ENCODE measurements at regions of chr12 and their contacts with region 1.

Region 1: GRCh38 chr12:57069523-57069922 is 9.1 kb downstream of the NEMP1 start:
- DNase-seq: no peak
- H3K4me3 ChIP-seq: peak overlapping the region in 1 of 8 donors; percentile 4
- H3K27ac ChIP-seq: peak overlapping the region; percentile 11 to 83 (median 76)
- H3K4me1 ChIP-seq: peaks cover 11 to 52% (median 29%) of the 10 kb centered on the region in 6 donors
- H3K27me3 ChIP-seq: no peaks in the 10 kb centered on the region
- CTCF ChIP-seq: peak; percentile 73 to 97 (median 92)
- POLR2A ChIP-seq: no peak

Region 2: DNA sequence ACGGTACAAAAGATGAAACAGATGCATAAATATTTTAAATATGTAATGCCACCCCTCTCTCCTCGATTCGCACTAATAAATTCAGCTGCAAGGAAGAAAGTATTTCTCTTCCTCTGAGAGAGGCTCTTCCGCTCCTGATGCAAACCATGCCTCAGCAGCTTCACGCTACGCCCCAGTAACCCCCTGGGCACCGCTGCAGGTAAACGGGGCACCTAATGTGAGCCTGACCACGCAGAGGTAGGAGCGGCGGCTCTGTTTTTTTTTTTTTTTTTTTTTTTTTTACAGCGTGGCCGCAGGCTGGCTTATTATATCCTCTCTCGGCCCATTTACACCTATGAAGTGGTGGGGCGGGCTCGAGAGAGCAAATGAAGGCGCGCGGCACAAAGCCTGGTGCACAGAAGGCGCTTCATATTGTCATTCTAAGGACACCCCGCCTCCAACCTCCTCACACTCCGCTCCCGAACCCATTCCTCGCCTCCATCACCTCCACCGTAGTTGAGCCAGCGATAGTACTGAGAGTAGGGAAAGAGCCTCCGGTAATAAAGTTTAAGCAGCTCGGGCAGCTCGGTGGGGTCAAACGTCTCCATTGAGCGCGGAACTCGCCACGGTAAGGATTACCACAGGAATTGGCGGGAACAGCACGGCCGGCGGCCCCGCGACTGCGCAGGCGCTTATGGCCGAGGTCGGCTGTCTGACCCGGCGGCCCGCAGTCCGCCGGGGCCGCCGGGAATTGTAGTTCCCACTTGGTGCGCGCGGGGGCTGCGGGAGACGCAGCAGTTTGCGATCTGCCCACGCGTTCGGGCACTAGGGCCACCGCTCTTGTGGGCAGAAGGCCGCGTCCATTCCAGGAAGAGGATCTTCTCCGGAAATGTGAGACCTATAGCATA is 317.6 kb before region 1 on chr12 and contains the start of gene PRIM1:
- intact Hi-C with region 1: loop called (anchors 10 kb)
- DNase-seq: peak; percentile 94
- H3K4me3 ChIP-seq: peak within 1 kb of the TSS; percentile 60 to 98 (median 89)
- H3K27ac ChIP-seq: peak within 1 kb of the TSS; percentile 54 to 90 (median 84)
- H3K4me1 ChIP-seq: peaks cover 21 to 59% (median 36%) of the 10 kb centered on the region in 6 donors
- H3K27me3 ChIP-seq: no peaks in the 10 kb centered on the region
- CTCF ChIP-seq: peak in 6 of 11 experiments; percentile 26 to 43 (median 39)
- POLR2A ChIP-seq: no peak
- total RNA-seq, gene PRIM1: 10.1 to 23.0 (median 11.4) TPM

Region 3: DNA sequence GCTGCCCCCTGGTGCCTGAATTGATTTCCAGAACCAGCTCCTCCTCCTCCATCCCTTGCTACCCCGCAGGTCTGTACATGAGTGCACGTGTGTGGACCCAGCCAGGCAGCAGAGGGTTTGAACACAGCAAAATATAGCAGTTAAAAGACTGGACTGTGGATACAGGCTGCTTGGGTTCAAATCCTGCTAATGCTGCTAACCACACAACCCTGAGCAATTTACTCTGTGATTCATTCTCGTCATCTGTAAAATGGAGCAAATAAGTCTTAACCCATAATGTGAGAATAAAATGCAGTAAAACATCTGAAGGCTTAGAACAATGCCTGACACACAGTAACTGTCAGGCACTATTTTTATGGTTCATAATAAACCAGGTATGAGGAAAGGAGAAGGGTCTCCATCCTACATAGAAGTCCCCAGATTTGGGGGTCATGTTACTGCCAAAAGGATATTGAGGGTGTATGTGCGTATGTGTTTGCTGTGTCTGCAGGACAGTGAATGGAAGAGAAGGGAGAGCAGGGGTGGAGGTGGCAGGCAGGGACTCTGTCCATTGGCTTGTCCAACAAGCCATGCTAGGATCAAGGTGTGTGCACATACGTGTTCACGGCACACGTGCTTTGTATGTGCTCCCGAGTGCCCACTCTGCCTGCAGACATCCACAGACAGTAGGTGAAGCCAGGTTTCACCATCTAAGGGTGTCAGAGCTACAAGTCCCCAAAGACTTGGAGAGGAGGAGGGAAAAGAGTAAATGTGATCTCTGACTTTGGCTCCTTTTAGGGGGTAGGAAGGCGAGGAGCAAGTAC is 43.2 kb after region 1 on chr12:
- intact Hi-C with region 1: loop called (anchors 2 kb)
- DNase-seq: no peak
- H3K4me3 ChIP-seq: peak overlapping the region in 6 of 8 donors; percentile 4 to 91 (median 82)
- H3K27ac ChIP-seq: peak overlapping the region; percentile 39 to 99 (median 98)
- H3K4me1 ChIP-seq: peaks cover 16 to 44% (median 30%) of the 10 kb centered on the region in 6 donors
- H3K27me3 ChIP-seq: no peaks in the 10 kb centered on the region
- CTCF ChIP-seq: peak in 9 of 11 experiments; percentile 88 to 95 (median 91)
- POLR2A ChIP-seq: no peak